Left ventricle myocardium superior (tissue), 1 donor: ENCODE measurements at regions of chr6 and their contacts with region 1.

Region 1: DNA sequence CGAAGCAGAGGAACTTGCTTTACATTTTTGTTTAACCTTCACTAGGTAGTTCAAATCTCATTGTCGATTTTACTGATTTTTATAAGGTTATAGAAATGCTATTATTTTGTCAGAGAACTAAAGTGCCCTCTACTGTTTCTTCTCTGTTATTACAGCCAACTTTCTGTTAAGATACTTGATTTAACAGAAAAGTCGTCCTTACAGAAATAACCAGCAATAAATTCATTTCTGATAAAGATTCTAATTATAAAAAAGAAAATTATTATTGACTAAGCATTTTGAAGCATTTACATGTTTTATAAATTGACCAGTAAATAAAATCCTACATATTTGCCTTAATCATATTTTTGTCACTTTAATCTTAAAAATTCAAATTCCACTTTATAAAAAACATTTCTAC is 60.8 kb downstream of the OGFRL1 start:
- DNase-seq: no peak
- ATAC-seq: no peak

Region 2: DNA sequence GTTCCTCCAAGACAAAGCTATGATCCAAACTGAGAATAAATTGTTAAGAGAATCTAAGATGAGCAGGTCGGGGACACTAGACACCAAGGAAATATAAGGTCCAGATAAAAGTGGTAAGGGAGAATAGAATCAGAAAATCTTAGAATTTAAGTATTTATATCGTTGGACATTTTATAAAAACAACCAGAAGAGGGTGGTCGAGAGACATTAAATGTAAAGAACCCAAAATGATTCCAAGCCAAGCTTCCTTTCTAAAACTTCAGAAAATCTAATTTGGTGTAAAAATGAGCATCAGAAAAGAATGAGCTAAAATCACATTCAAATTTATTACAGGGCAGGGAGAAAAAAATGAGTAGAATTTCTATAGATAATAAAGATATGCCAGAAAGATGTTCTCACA is 158.6 kb before region 1 on chr6:
- intact Hi-C with region 1: loop called (anchors 5 kb)
- DNase-seq: no peak
- ATAC-seq: no peak